Activated CD4-positive, alpha-beta memory T cell treated with anti-CD3 and anti-CD28 coated beads, Interleukin-2, amount 10 ng/mL, durations not matched to agents 7 days and 5 days (primary cell): ENCODE measurements at regions of chr1 and their contacts with region 1.

Region 1: DNA sequence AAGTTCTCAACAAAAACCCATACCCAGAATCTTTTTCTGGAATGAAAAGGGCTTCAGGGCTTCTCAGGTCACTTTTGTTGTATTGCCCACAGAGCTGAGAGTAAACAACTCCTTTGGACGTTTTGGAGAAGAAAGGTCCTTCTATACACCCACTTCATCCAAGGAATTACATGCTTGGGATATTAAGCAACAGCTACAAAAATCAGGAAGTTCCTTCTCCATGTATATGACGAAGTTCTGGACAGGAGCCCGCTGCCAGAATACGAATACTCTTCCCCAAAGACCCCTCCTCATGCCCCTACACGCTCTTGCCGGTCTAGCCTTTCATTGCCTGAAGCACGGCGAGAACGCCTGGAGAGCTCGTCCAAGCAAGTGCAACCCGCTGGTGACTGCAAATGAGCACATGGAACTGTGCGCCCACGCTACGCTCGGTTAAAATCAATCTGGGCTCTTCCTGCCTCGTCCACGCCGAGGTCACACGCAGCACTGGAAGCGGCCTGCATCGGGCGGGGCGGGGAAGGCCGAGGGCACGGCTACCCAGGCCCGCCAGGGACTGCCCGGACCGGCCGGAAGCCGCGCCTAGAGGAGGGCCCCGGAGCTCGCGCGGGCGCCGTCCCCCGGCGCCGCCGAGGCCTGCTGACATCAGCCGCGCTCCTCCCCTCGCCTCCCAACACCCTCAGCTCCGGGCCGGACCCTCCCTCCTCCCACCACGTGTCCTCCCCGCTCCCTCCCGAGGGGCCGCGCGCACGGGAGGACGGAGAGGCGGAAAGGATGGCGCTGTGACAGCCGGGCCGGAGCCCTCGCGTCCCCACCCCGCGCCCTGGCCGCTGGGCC is at the start of gene POGK:
- DNase-seq: peak; percentile 87
- H3K4me3 Mint-ChIP-seq: peak within 1 kb of the TSS; percentile 84
- H3K27ac Mint-ChIP-seq: peak within 1 kb of the TSS; percentile 82
- H3K4me1 Mint-ChIP-seq: peaks cover 39% of the 10 kb centered on the region
- H3K27me3 Mint-ChIP-seq: peaks cover 8% of the 10 kb centered on the region
- total RNA-seq, gene POGK: 34.4 to 36.5 TPM

Region 2: GRCh38 chr1:166489670-166490436 is 349.1 kb before region 1 on chr1:
- CTCF ChIA-PET with region 1: no interaction called
- POLR2A ChIA-PET with region 1: interaction called, 10 read pairs
- DNase-seq: peak; percentile 52
- H3K4me3 Mint-ChIP-seq: no peak overlapping the region
- H3K27ac Mint-ChIP-seq: no peak overlapping the region
- H3K4me1 Mint-ChIP-seq: peaks cover 7% of the 10 kb centered on the region
- H3K27me3 Mint-ChIP-seq: no peaks in the 10 kb centered on the region

Region 3: GRCh38 chr1:166796620-166797236 is 42.3 kb before region 1 on chr1:
- CTCF ChIA-PET with region 1: no interaction called
- POLR2A ChIA-PET with region 1: no interaction called
- DNase-seq: no peak
- H3K4me3 Mint-ChIP-seq: no peak overlapping the region
- H3K27ac Mint-ChIP-seq: no peak overlapping the region
- H3K4me1 Mint-ChIP-seq: no peaks in the 10 kb centered on the region
- H3K27me3 Mint-ChIP-seq: peaks cover 9% of the 10 kb centered on the region